ENCODE measurements at regions of chr10 and their contacts with region 1.

Region 1: DNA sequence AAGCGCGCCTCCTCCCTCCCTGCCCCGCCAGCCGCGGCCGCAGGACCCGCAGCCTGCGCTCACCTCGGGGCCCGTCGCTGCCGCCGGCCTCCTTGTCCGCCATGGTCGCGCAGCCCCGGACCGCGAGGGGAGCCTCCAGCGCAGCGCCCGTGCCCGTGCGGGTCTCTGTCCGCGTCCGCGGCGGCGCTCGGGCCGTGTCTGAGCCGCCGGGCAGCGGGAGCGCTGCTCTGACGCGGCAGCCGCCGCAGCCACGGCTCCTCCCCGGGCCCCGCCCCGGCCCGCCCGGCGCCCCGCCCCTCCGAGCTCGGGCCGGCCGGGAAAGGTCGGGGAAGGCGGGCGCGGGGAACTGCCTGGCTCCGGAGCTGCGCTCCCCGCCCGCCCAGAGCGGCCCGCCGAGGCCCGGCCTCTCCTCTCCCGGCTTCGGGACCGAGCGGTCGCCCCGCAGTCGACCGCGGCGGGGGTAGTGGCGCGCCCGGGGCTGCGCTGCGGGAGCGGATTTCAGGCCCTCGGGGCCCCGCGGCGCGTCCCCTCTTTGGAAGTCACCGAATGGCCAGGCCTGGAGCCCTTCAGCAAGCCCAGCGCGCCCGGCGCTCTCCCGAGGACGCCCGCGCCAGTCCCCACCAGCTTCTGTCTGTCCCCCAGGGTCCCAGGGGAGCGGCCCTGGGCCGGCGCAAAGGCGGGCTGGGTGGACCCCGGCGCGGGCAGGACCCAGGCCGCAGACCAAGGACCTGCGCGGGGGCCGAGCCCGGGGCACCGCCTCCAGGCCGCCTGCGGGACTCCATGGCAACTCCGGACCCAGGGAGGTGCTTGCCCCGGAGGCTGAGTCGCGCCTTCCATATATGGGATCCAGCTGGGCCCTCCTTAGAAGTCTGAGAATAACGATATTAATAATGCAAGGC is at the start of gene HSPA12A:
- DNase-seq: peak; percentile 82 to 86 (median 84)
- ATAC-seq: peak; percentile 87 to 96 (median 92)
- H3K4me3 ChIP-seq: peak within 1 kb of the TSS; percentile 65 to 93 (median 82)
- H3K27ac ChIP-seq: peak within 1 kb of the TSS; percentile 85 to 97 (median 93)
- H3K4me1 ChIP-seq: peaks cover 0 to 24% (median 11%) of the 10 kb centered on the region in 12 donors
- H3K27me3 ChIP-seq: peaks cover 0 to 49% (median 2%) of the 10 kb centered on the region in 9 donors
- CTCF ChIP-seq: peak in 1 of 12 donors; percentile 4
- POLR2A ChIP-seq: peak; percentile 66 to 92
- total RNA-seq, gene HSPA12A: 11.0 to 17.0 (median 13.8) TPM

Region 2: DNA sequence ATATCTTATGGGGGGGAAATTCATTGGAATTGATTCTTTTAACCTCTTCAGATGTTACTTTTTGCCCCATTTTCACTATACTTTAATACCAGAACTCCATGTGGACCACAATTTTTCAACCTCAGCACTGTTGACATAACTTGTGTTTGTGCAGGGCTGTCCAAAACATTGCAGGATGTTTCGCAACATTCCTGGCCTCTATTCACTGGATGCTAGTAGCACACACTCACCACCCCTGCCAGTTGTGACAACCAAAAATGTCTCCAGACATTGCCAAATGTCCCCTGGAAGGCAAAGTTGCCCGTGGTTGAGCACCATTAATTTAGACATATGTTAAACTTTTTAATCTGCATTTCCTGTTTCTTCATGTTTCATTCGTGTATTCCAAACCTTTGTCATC is 704.4 kb before region 1 on chr10:
- intact Hi-C with region 1: no loop called
- DNase-seq: peak in 2 of 5 donors; percentile 43 to 44
- ATAC-seq: peak; percentile 54 to 73 (median 63)
- H3K4me3 ChIP-seq: no peak overlapping the region
- H3K27ac ChIP-seq: no peak overlapping the region
- H3K4me1 ChIP-seq: no peaks in the 10 kb centered on the region
- H3K27me3 ChIP-seq: no peaks in the 10 kb centered on the region
- CTCF ChIP-seq: no peak
- POLR2A ChIP-seq: no peak

Region 3: GRCh38 chr10:116683821-116684220 is 58.8 kb before region 1 on chr10:
- intact Hi-C with region 1: loop called in 4 of 10 experiments (anchors 5 kb)
- DNase-seq: no peak
- ATAC-seq: no peak
- H3K4me3 ChIP-seq: no peak overlapping the region
- H3K27ac ChIP-seq: no peak overlapping the region
- H3K4me1 ChIP-seq: peaks cover 0 to 27% (median 16%) of the 10 kb centered on the region in 12 donors
- H3K27me3 ChIP-seq: no peaks in the 10 kb centered on the region
- CTCF ChIP-seq: no peak
- POLR2A ChIP-seq: no peak

Region 4: DNA sequence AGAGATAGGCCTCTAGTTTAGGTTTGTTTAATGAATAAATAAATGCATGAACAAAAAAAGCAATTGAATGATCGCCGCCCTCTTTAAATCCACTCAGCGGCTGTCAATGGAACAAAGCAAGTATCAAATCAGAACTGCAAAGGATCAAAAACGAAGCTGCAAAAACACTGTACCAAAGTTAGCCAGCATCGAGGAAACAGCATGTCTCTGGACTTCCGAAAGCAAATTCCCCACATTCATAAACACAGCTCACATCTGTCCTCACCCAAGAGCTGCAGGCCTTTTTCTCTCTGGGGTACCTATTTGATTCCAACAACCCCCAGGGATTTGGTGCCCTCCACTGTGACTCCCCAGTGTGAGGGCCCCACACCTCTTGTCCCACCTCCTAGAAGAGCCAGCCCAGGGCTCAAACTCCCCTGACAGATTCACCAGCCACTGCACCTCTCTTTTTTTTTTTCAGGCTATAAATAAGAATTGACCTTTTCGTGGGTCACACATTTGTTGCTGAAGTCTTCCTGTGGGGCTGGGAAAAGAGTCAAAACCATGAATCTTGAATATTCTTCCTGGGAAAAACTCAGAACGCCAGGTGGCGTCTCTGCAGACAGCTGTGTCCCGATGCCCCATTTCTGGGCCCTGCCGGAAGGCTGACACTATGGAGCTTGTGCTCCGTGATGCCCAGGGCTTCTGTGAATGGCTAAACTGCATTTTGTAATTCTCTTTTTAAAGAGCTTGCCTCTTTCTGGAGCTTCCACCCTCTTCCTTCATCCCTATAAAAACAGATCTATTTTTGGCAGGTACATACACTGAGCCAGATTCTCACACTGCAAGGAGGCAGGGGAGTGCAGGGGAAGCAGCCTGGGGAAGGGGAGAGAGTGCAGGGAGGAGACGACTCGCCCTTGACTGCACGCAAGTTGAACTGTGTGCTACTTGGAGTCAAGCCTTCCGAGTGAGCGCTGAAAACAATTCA is 52.0 kb before region 1 on chr10:
- intact Hi-C with region 1: loop called in 8 of 10 experiments (anchors 2 to 5 kb)
- DNase-seq: peak in 3 of 5 donors; percentile 54 to 63 (median 58)
- ATAC-seq: peak; percentile 46 to 66 (median 62)
- H3K4me3 ChIP-seq: peak overlapping the region in 1 of 12 donors; percentile 23
- H3K27ac ChIP-seq: peak overlapping the region in 10 of 12 donors; percentile 40 to 75 (median 52)
- H3K4me1 ChIP-seq: peaks cover 0 to 55% (median 42%) of the 10 kb centered on the region in 12 donors
- H3K27me3 ChIP-seq: no peaks in the 10 kb centered on the region
- CTCF ChIP-seq: peak in 11 of 12 donors; percentile 21 to 63 (median 38)
- POLR2A ChIP-seq: no peak

Region 5: GRCh38 chr10:116699471-116700150 is 43.0 kb before region 1 on chr10:
- intact Hi-C with region 1: loop called in 5 of 10 experiments (anchors 5 kb)
- DNase-seq: no peak
- ATAC-seq: no peak
- H3K4me3 ChIP-seq: no peak overlapping the region
- H3K27ac ChIP-seq: no peak overlapping the region
- H3K4me1 ChIP-seq: peaks cover 0 to 11% (median 0%) of the 10 kb centered on the region in 12 donors
- H3K27me3 ChIP-seq: no peaks in the 10 kb centered on the region
- CTCF ChIP-seq: no peak
- POLR2A ChIP-seq: no peak

Measured in heart left ventricle (tissue), 16 donors.